ENCODE measurements at regions of chr3 and their contacts with region 1.

Region 1: GRCh38 chr3:106176734-106177133 is 307.9 kb upstream of the CBLB start:
- DNase-seq: peak; percentile 79
- H3K4me3 Mint-ChIP-seq: peak overlapping the region; percentile 38
- H3K27ac Mint-ChIP-seq: peak overlapping the region; percentile 93
- H3K4me1 Mint-ChIP-seq: peaks cover 59% of the 10 kb centered on the region
- H3K27me3 Mint-ChIP-seq: no peaks in the 10 kb centered on the region

Region 2: DNA sequence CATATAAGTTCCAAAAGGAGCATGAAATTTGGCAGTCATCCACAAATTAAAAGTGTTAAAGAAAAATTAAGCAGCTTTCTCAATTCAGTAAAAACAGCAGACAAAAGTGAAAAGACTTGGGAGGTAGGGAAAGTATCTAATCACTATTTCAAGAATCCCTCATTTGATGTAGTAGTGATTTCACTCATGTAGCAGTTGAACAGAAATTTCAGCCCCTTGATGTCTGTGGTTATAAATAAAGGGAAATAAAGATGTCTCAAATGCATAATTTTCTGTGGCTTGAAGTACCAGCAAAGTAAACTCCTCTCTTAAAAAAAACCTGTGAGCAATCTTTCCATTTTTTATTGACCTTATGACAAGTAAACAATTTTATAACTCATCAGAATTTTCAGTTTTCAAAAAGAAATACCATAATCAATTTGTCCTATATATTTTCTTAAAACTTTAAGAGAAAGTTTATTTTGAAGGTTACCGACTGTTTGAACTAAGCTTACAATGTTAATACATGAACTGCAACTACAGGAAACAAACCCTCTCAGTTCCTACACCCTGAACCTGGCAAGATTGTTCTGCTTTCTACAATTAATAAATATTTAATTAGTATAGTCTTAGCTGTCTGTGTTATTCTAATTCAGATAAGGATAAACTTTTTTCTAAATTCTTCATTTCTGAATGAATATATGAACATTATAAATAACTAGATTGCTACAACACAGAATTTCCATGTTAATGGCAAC is 402.1 kb before region 1 on chr3:
- CTCF ChIA-PET with region 1: no interaction called
- intact Hi-C with region 1: loop called (anchors 2 kb)
- DNase-seq: no peak
- H3K4me3 Mint-ChIP-seq: no peak overlapping the region
- H3K27ac Mint-ChIP-seq: peak overlapping the region; percentile 26
- H3K4me1 Mint-ChIP-seq: peaks cover 74% of the 10 kb centered on the region
- H3K27me3 Mint-ChIP-seq: no peaks in the 10 kb centered on the region

Region 3: GRCh38 chr3:106013971-106014370 is 162.8 kb before region 1 on chr3:
- CTCF ChIA-PET with region 1: no interaction called
- intact Hi-C with region 1: loop called (anchors 1 kb)
- DNase-seq: no peak
- H3K4me3 Mint-ChIP-seq: no peak overlapping the region
- H3K27ac Mint-ChIP-seq: peak overlapping the region; percentile 37
- H3K4me1 Mint-ChIP-seq: peaks cover 49% of the 10 kb centered on the region
- H3K27me3 Mint-ChIP-seq: no peaks in the 10 kb centered on the region

Region 4: DNA sequence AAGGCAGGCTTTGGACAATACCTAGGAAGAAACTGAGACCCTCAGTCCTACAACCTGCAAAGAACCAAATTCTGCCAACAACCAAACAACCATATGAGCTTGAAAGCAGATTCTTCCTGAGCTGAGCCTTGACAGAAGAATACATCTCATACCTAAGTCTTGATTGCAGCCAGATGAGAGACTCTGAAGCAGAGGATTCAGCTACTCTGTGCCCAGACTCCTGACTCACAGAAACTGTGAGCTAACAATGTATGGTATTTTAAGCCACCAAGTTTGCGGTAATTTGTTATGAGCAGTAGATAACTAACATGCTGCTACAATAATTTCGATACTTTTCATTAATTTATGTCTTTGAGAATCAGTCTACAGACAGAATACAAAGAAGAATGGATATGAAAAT is 17.1 kb after region 1 on chr3:
- CTCF ChIA-PET with region 1: no interaction called
- intact Hi-C with region 1: no loop called
- DNase-seq: no peak
- H3K4me3 Mint-ChIP-seq: no peak overlapping the region
- H3K27ac Mint-ChIP-seq: no peak overlapping the region
- H3K4me1 Mint-ChIP-seq: peaks cover 23% of the 10 kb centered on the region
- H3K27me3 Mint-ChIP-seq: no peaks in the 10 kb centered on the region

Region 5: DNA sequence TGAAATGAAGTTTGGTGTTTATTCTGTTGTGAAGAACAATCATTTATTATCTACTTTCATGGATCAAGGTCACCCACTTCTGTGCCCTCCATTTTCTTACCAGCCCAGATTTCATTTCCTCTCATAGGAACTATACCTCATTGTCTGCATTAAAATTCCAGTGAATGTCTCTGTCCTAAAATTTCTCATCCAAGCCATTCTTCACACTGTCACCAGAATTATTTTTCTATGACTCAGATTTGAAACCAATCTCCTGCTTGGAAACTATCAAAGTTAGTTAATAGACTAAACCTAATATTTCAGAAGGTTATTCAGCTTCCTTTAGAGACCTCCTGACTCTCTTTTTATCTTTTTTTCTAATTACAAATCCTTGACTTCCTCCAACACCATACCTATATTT is 56.2 kb after region 1 on chr3:
- CTCF ChIA-PET with region 1: no interaction called
- intact Hi-C with region 1: loop called (anchors 1 kb)
- DNase-seq: no peak
- H3K4me3 Mint-ChIP-seq: no peak overlapping the region
- H3K27ac Mint-ChIP-seq: peak overlapping the region; percentile 86
- H3K4me1 Mint-ChIP-seq: peaks cover 56% of the 10 kb centered on the region
- H3K27me3 Mint-ChIP-seq: no peaks in the 10 kb centered on the region

Region 6: DNA sequence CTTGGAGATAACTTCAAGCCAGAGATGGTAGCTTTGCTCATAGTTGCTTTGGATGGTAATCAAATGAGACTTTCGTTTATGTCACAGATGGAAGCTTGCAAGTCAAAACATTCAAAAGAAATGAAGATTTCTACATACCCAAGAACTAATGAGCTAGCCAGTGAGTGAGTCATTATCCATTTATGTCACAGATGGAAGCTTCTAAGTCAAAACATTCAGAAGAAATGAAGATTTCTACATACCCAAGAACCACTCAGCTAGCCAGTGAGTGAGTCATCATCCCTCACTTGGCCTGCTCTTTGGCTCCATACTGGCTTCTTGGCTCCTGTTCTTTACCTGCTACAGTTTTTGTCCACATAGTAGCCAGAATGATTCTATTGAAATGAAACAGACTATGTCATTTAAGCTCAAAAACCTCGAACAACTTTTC is 251.8 kb after region 1 on chr3:
- CTCF ChIA-PET with region 1: interaction called, 3 read pairs
- intact Hi-C with region 1: loop called (anchors 1 kb)
- DNase-seq: peak; percentile 66
- H3K4me3 Mint-ChIP-seq: no peak overlapping the region
- H3K27ac Mint-ChIP-seq: peak overlapping the region; percentile 81
- H3K4me1 Mint-ChIP-seq: peaks cover 46% of the 10 kb centered on the region
- H3K27me3 Mint-ChIP-seq: no peaks in the 10 kb centered on the region

Region 7: GRCh38 chr3:107522510-107523288 is 1346.0 kb after region 1 on chr3 and contains the start of gene BBX:
- CTCF ChIA-PET with region 1: no interaction called
- intact Hi-C with region 1: loop called (anchors 10 kb)
- DNase-seq: peak; percentile 94
- H3K4me3 Mint-ChIP-seq: peak within 1 kb of the TSS; percentile 92
- H3K27ac Mint-ChIP-seq: peak within 1 kb of the TSS; percentile 94
- H3K4me1 Mint-ChIP-seq: peaks cover 23% of the 10 kb centered on the region
- H3K27me3 Mint-ChIP-seq: no peaks in the 10 kb centered on the region
- total RNA-seq, gene BBX: 43.1 to 48.6 TPM

Measured in activated naive CD4-positive, alpha-beta T cell treated with anti-CD3 and anti-CD28 coated beads for 36 hours (primary cell).